BJ (cell line): ENCODE measurements at regions of chr2 and their contacts with region 1.

Region 1: GRCh38 chr2:223993621-223994232 is 36.5 kb downstream of the MRPL44 start:
- DNase-seq: no peak
- H3K4me3 ChIP-seq: no peak overlapping the region
- H3K27me3 ChIP-seq: no peaks in the 10 kb centered on the region
- CTCF ChIP-seq: peak; percentile 79

Region 2: DNA sequence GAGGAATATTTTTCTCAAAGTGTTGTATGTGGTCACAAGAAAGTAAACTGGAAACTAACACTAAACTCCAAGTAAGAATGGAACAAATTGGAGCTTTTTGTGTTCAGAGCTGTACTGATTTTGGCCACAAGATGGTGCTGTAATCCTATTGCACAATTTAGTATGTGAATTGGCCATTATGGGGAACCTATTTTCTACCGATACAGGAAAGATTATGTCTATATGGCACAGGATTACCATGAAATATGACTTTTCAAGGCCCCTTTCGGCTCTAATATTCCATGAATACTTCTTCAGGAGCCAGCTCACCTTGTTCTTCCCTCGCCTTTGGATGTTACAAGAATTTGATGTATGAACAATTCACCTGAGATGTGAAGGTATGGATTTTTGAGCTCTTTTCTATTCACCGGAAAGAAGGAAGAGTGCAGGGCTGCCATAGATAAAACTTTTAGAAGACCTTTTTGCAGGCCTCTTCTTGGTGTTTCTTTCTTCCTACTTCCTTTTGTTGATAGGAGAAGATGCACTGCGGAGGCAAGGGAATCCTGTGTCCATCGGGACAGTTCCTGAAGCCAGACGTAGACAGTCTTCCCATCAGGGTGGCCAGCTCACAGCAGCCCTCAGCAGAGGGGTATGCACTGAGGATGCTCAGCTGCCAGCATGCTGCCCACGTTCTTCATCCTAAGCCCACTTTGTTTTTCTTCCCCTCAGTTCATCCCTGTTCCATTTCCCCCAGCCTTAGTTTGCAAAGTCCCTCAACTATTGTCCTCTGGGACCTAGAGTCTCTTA is 23.2 kb before region 1 on chr2:
- CTCF ChIA-PET with region 1: interaction called, 89 read pairs
- POLR2A ChIA-PET with region 1: no interaction called
- DNase-seq: no peak
- H3K4me3 ChIP-seq: no peak overlapping the region
- H3K27me3 ChIP-seq: no peaks in the 10 kb centered on the region
- CTCF ChIP-seq: peak; percentile 82

Region 3: DNA sequence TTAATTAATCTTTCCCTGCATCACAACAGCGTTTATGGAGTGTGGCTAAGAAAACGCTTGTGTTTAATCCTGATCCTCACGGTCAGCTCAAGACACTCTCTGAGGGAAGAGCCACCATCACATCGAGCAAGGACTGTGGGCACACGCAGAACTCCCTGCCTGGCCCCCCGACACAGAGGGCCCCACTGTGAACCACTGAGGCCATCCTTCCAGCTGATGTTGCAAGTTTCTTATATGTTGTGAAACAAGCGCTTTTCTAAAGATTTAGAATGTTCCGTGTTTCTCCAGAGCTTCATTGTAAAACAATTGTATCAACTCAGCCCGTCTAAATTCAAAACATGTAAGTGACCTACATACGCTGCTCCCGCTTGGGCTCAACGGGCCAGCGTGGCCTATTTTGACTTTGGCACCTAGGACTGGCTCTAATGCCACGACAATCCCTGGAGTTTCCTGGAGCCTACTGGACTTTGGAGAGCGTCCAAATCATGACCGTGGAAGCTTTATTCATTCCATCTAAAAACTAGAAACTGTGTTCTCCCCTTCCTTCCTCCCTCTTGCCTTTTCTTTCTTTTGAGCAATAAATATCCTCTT is 10.5 kb after region 1 on chr2:
- CTCF ChIA-PET with region 1: interaction called, 10 read pairs
- POLR2A ChIA-PET with region 1: no interaction called
- DNase-seq: no peak
- H3K4me3 ChIP-seq: no peak overlapping the region
- H3K27me3 ChIP-seq: no peaks in the 10 kb centered on the region
- CTCF ChIP-seq: no peak

Region 4: DNA sequence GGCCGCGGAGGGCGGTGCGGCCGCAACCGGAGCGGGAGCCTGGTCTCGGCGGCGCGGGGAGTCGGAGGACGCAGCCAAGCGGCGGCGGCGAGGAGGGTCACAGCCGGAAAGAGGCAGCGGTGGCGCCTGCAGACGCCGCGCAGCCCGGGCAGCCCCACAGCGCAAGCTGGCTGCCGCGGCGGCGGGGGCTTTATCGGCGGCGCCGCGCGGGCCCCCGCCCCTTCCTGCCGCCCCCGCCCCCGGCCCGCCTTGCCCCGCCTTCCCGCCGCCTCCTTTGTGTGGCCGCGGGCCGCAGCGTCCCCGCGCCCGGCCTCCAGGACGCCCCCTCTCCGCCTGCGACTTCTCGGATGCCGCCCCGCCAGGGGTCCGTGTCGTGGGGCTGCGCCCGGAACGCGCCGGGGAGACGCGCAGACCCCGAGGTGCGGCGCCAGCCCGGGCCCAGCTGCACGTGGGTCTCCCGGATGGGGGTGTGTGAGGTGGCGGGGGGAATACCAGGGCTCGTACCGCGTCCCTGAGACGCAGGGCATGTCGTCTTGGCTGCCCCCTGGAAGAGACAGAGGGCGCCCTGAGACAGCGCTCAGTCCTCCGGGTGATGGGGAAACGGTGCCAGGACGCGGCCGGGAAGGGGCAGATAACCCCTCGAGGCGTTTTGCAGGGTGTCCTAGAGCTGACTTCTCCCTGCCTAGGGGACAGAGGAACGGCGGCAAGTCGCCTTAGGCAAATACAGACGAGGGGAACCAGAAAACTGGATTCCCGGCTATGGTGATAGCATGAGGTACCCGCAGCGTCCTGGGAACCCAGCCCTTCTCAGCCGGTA is 45.6 kb after region 1 on chr2 and contains the start of gene SERPINE2:
- CTCF ChIA-PET with region 1: interaction called, 10 read pairs
- POLR2A ChIA-PET with region 1: interaction called, 19 read pairs
- DNase-seq: no peak
- H3K4me3 ChIP-seq: peak within 1 kb of the TSS; percentile 72
- H3K27me3 ChIP-seq: no peaks in the 10 kb centered on the region
- CTCF ChIP-seq: peak; percentile 60
- polyA plus RNA-seq, gene SERPINE2: 387 and 750 TPM in 2 replicates

Region 5: GRCh38 chr2:224284134-224284946 is 290.6 kb after region 1 on chr2:
- CTCF ChIA-PET with region 1: interaction called, 173 read pairs
- POLR2A ChIA-PET with region 1: interaction called, 3 read pairs
- DNase-seq: no peak
- H3K4me3 ChIP-seq: no peak overlapping the region
- H3K27me3 ChIP-seq: no peaks in the 10 kb centered on the region
- CTCF ChIP-seq: peak; percentile 43